HEK293 (cell line): ENCODE measurements at regions of chr19 and their contacts with region 1.

Region 1: GRCh38 chr19:48993175-48994034 is at the starts of genes GYS1 and RUVBL2:
- H3K4me3 ChIP-seq: peak within 1 kb of the TSS; percentile 81
- H3K27ac ChIP-seq: peak within 1 kb of the TSS; percentile 81
- H3K4me1 ChIP-seq: peaks cover 12% of the 10 kb centered on the region; the same call in 1 of the 2 replicates
- CTCF ChIP-seq: peak; percentile 100

Region 2: DNA sequence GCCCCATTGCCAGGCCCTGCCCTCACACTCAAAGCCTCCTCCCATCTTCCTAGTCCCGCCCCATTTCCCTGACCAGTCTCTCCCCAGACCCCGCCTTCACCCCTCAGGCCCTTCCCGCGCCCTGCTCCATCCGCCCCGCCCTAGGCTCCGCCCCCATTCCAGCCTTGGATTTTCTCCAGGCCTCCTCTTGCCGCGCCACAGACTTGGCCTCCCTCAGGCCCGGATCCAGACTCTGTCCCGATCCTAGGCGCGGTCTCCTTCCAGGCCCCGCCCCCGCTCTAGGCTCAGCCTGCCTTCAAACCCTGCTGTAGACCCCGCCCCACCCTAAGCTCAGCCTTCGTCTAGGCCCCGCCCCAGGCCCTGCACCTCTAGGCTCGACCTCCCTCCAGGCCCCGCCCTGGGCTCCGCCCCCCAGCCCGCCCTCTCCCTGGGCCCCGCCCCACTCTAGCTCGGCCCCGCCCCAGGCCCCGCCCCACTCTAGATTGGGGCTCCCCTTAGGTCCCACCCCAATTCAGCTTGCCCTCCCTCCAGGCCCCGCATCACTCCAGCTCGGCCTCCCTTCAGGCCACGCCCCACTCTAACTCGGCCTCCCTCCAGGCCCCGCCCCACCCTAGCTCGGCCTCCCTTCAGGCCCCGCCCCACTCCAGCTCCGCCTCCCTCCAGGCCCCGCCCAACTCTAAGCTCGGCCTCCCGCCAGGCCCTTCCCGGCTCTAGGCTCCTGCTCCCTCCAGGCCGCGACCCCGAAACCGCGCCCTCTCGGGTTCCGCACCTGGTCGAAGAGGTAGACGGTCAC is 500.3 kb before region 1 on chr19:
- CTCF ChIA-PET with region 1: no interaction called
- POLR2A ChIA-PET with region 1: interaction called, 13 read pairs
- H3K4me3 ChIP-seq: peak overlapping the region; percentile 23
- H3K27ac ChIP-seq: no peak overlapping the region
- H3K4me1 ChIP-seq: peaks cover 6% of the 10 kb centered on the region
- CTCF ChIP-seq: no peak

Region 3: GRCh38 chr19:48899781-48900476 is 93.5 kb before region 1 on chr19 and contains the start of gene NUCB1:
- CTCF ChIA-PET with region 1: interaction called, 3 read pairs
- POLR2A ChIA-PET with region 1: interaction called, 11 read pairs
- H3K4me3 ChIP-seq: peak within 1 kb of the TSS; percentile 54
- H3K27ac ChIP-seq: peak within 1 kb of the TSS; percentile 62
- H3K4me1 ChIP-seq: no peaks in the 10 kb centered on the region
- CTCF ChIP-seq: peak; percentile 22; the same call in 1 of the 2 replicates

Region 4: GRCh38 chr19:48975947-48976847 is 17.2 kb before region 1 on chr19:
- CTCF ChIA-PET with region 1: interaction called, 79 read pairs
- POLR2A ChIA-PET with region 1: interaction called, 30 read pairs
- H3K4me3 ChIP-seq: no peak overlapping the region
- H3K27ac ChIP-seq: no peak overlapping the region
- H3K4me1 ChIP-seq: no peaks in the 10 kb centered on the region
- CTCF ChIP-seq: no peak

Region 5: DNA sequence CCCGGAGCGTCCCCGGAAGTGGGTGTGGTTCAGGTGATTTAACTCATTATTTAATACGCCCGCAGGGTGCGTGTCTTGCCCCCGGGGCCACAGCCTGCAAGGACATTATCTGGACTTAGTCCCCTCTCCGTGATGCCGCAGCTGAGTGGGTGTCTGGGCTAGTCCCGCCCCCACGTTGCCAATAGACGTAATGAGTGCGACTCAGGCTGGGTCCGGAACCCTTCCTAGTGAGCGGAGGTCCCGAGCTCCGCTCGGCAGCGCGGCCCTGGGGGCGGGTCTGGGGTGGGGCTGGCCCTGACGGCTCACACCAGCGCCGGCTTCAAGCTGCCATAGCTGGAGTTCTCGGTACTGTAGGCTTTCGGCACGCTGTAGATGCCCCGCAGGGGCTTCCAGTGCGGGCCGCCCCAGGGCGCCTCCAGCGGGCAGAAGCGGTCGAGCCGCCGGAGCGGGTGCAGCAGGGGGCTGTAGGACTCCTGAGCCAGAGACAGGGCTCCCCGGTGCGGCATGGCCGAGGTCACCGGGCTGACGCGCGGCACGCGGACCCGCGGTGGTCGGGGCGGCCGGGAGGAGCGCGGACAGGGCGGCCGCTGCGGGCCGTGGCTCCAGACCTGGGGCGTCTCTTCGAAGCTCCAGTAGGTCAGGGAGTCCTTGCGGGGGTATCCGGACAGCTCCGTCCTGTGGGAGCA is 24.4 kb after region 1 on chr19:
- CTCF ChIA-PET with region 1: interaction called, 133 read pairs
- POLR2A ChIA-PET with region 1: interaction called, 20 read pairs
- H3K4me3 ChIP-seq: peak overlapping the region; percentile 24
- H3K27ac ChIP-seq: no peak overlapping the region; the same call in 1 of the 2 replicates
- H3K4me1 ChIP-seq: peaks cover 8% of the 10 kb centered on the region
- CTCF ChIP-seq: no peak; the same call in 1 of the 2 replicates

Region 6: DNA sequence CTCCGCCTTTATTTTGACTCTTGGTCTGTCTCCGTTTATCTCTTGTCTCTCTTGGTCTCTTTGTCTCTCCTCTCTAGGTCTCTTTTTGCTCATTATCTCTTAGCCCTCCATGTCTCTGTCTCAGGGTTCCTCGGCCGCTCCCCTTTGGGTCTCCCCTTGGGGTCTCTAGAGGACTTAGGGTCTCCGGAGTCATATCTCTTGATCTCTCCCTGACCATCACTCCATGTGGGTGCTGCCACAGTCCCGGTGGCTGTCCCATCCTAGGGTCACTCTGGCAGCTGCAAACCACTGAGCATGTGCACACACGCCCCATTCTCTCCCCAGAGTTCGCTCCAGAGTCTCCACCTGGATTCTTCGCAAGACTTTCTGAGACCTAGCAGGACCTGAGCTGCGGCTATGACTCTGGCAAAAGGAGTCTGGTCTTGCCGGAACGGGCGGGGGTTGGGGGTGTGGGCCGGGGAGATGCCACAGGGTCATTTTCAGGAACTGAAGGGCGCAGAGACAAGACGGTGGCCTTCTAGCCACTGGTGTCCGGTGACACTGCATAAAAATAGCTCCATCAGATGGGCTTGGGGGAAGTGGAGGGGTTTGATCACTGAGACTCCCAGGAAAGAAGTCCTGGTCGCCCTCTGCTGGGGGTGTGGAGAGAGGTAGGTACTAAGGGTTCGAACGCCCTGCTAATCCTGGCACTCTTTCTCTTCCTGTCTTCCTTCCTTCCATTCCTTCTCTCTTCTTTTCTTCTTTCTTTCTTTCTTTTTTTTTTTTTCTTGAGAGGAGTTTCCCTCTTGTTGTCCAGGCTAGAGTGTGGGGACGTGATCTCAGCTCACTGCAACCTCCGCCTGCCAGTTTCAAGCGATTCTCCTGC is 80.3 kb after region 1 on chr19:
- CTCF ChIA-PET with region 1: interaction called, 88 read pairs
- POLR2A ChIA-PET with region 1: interaction called, 8 read pairs
- H3K4me3 ChIP-seq: no peak overlapping the region
- H3K27ac ChIP-seq: no peak overlapping the region
- H3K4me1 ChIP-seq: no peaks in the 10 kb centered on the region
- CTCF ChIP-seq: peak; percentile 66